H1 (cell line): ENCODE measurements at regions of chr18 and their contacts with region 1.

Region 1: GRCh38 chr18:47997338-47997780 is 66.9 kb upstream of the SMAD2 start:
- DNase-seq: peak; percentile 70 to 96
- H3K4me3 ChIP-seq: no peak overlapping the region
- H3K27ac ChIP-seq: no peak overlapping the region
- H3K4me1 ChIP-seq: no peaks in the 10 kb centered on the region; a peak in 1 of 7 replicates
- H3K27me3 ChIP-seq: no peaks in the 10 kb centered on the region
- CTCF ChIP-seq: peak; percentile 84 to 96 (median 95)
- EP300 ChIP-seq: no peak
- POLR2A ChIP-seq: no peak
- RAD21 ChIP-seq: peak; percentile 91 to 97

Region 2: DNA sequence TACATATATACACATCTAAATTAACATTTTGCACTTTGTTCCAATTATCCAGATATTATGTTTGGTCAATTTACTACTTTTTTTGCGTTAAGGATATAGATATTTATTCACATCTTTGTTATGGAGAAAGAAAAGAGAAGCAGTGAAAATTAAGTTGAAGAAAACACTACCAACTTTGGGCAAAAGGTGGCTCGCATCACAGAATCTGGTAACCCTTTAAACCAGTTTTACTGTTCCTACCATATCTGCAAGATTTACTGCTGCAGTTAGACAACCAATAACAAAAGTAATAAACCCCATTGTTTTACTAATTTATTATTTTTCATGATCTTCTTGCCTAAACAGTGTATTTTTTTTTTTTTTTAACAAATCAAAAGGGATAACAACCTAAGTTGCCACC is 120.5 kb before region 1 on chr18:
- CTCF ChIA-PET with region 1: interaction called, 14 read pairs
- POLR2A ChIA-PET with region 1: no interaction called
- DNase-seq: no peak
- H3K4me3 ChIP-seq: no peak overlapping the region
- H3K27ac ChIP-seq: no peak overlapping the region
- H3K4me1 ChIP-seq: peaks cover 0 to 5% (median 1%) of the 10 kb centered on the region in 4 experiments; a peak in 2 of 7 replicates
- H3K27me3 ChIP-seq: no peaks in the 10 kb centered on the region
- CTCF ChIP-seq: no peak
- EP300 ChIP-seq: no peak
- POLR2A ChIP-seq: no peak
- RAD21 ChIP-seq: no peak; a peak in 2 of 4 replicates

Region 3: DNA sequence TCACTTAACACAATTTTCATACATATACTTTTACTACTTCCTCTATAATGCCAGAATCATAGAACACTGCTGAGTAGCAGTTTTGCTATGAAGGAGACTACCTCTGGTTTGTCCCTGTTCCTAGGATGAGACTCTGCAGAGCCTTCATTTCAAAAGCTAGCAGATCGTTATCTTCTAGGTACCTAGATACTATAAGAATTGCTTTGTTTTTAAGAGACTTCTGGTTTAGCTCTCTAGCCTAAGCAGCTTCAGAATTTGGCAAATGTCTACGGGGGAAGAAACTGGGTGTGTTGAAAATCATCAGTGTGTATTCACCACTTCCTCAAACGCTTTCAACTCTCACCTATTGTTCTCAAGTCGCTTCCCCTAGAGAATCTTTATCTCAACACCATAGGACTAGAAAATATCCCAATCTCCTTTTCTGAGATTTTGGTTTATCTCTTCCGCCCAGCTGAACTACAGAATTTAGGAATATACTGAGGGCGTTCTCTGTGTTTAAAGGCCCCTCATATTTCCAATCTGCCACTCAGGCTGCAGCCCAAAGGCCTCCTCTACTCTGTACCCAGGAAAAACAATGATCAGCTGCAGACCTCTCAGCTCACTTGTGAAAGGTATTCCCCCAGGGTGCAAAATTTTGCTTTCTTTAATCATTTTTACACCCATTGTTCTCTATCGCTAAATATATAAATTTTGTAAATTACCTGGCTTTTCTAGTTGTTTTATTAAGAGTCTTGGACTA is 95.6 kb before region 1 on chr18:
- CTCF ChIA-PET with region 1: interaction called, 35 read pairs
- POLR2A ChIA-PET with region 1: no interaction called
- DNase-seq: no peak
- H3K4me3 ChIP-seq: no peak overlapping the region; a peak in 1 of 8 replicates
- H3K27ac ChIP-seq: no peak overlapping the region
- H3K4me1 ChIP-seq: peaks cover 3 to 29% (median 13%) of the 10 kb centered on the region in 4 experiments; a peak in 5 of 7 replicates
- H3K27me3 ChIP-seq: no peaks in the 10 kb centered on the region
- CTCF ChIP-seq: no peak
- EP300 ChIP-seq: no peak
- POLR2A ChIP-seq: no peak
- RAD21 ChIP-seq: no peak

Region 4: DNA sequence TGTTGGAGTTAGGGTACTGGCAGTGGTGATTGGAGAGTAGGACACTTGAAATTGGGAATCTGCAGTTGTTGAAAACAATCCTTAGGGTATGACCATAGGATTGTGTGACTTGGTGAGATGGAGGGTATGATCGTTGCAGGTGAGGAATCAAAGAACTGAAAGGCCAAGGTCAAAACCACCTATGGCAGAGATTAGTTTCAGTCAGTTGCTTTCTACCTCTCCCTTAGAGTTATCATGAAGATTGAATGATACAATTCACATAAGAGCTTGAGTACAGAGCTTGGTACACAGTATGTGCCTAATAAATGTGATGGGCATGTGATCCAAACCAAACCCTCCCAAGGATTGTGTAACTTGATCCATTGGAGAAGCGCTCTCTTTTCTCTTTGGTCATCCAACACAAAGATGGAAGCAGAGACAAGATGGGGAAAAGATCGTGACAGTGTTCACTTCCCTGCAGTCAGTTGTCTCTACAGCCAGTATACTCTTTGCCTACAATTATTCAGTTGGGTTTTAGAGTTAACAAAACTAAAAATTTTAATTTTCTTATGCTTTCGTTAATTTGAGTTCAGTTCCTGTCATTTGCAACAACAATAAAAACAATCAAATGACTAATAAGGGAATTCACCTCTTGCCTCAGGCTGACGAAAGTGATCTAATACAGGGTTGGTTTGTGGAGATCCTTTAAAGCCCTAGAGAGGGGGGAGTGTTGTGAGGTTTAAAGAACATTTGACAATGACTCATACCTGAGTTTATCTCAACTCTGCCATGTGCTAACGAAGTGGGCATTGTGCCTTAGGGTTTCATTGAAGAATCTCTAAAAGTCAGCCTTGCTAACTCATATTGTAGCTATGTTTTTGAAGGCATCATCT is 52.2 kb before region 1 on chr18:
- CTCF ChIA-PET with region 1: interaction called, 117 read pairs
- POLR2A ChIA-PET with region 1: no interaction called
- DNase-seq: no peak
- H3K4me3 ChIP-seq: no peak overlapping the region
- H3K27ac ChIP-seq: no peak overlapping the region
- H3K4me1 ChIP-seq: no peaks in the 10 kb centered on the region
- H3K27me3 ChIP-seq: no peaks in the 10 kb centered on the region
- CTCF ChIP-seq: no peak
- EP300 ChIP-seq: no peak
- POLR2A ChIP-seq: no peak
- RAD21 ChIP-seq: no peak

Region 5: DNA sequence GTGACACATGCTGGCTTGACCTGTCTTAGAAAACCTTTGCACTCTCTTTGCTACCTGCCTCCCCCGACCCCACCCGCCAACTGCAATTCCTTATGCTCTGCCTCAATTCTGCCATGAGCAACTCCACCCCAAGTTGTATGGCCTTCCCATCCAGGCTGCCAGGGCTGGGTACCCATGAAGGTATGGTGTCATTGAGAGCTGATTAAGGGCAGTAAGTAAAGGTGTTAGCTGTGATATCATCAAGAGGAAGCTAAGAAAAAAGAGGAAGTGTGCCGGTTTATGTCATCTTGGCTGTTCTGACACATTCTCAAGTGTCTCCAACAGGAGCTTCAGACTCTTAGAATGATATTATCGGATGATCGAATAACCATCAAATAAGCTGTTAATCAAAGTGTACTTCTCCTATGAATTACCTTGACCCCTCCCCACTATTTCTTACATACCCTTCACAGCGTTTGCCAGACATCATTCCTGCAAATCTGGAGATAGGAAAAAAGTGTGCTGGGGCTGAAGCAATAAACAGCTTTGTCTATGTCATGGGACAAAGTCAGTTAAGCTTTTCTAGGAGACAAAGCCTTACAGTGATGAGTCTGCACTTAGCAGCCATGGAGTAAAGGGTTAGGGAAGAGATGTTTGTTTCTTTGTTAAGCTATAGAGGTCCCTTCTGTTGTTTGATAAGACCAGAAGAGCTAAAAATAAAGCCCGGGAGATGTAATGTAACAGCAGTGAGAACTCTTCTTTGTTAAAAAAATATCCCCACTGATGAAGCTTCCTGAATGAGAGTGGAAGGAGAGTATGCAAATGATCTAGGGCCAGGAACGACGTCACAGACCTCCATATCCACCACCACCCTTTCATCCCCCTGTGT is 26.5 kb before region 1 on chr18:
- CTCF ChIA-PET with region 1: interaction called, 30 read pairs
- POLR2A ChIA-PET with region 1: interaction called, 3 read pairs
- DNase-seq: no peak
- H3K4me3 ChIP-seq: no peak overlapping the region
- H3K27ac ChIP-seq: no peak overlapping the region
- H3K4me1 ChIP-seq: peaks cover 7 to 27% (median 24%) of the 10 kb centered on the region in 4 experiments; a peak in 6 of 7 replicates
- H3K27me3 ChIP-seq: no peaks in the 10 kb centered on the region
- CTCF ChIP-seq: no peak
- EP300 ChIP-seq: no peak
- POLR2A ChIP-seq: no peak
- RAD21 ChIP-seq: no peak

Region 6: DNA sequence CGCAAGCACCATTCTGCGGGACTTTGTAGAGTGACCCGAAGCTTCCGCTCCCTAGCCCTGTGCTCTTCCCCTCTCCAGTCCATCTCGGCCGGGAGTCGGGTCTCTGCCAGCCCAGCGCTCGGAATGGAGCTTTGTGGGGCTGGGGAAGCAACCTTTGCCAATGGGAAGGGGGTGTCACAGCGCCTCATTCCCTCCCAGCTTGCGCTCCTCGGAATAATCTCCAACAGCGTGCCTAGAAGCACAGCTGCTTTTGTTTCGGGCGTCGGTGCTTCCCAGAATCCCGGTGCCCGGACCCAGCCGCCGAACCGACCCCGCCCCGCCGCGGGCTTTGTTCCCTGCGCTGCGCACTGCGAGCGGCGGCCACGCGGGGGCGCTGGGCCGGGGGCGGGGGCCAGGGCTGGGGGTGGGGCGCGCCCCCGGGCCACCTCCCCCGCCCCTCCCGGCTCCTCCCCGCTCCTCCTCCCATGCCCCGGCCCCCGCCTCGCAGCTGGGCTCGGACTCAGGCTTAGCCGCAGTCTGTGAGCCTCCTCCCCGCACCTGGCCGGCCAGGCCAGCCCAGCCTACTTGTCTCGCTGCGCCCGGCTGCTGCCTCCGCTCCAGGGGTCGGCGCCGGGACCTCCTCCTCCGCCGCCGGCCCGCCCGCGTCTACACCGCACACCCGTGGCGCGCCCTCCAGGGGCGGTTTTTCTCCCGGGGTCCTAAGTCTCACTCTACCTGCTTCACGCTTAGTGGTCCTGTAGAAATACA is 10.8 kb after region 1 on chr18:
- CTCF ChIA-PET with region 1: interaction called, 33 read pairs
- POLR2A ChIA-PET with region 1: interaction called, 3 read pairs
- DNase-seq: peak; percentile 70 to 88
- H3K4me3 ChIP-seq: peak overlapping the region; percentile 37 to 70 (median 50)
- H3K27ac ChIP-seq: peak overlapping the region; percentile 14; the same call in 1 of the 2 replicates
- H3K4me1 ChIP-seq: peaks cover 0 to 18% (median 10%) of the 10 kb centered on the region in 4 experiments; a peak in 5 of 7 replicates
- H3K27me3 ChIP-seq: peaks cover 0 to 16% (median 11%) of the 10 kb centered on the region in 4 experiments; a peak in 5 of 7 replicates
- CTCF ChIP-seq: peak; percentile 49 to 55 (median 52)
- EP300 ChIP-seq: no peak
- POLR2A ChIP-seq: peak; percentile 53 to 61; a peak in 2 of 3 replicates
- RAD21 ChIP-seq: 0 out of 4 replicates have a peak, but pooled peaks of 1 of the 2 experiments have one; percentile 5

Region 7: GRCh38 chr18:48193541-48194492 is 196.5 kb after region 1 on chr18:
- CTCF ChIA-PET with region 1: no interaction called
- POLR2A ChIA-PET with region 1: no interaction called
- DNase-seq: peak in 1 of 2 experiments; percentile 33
- H3K4me3 ChIP-seq: no peak overlapping the region
- H3K27ac ChIP-seq: no peak overlapping the region
- H3K4me1 ChIP-seq: no peaks in the 10 kb centered on the region; a peak in 1 of 7 replicates
- H3K27me3 ChIP-seq: no peaks in the 10 kb centered on the region
- CTCF ChIP-seq: no peak
- EP300 ChIP-seq: no peak
- POLR2A ChIP-seq: no peak
- RAD21 ChIP-seq: no peak